B cell (primary cell): ENCODE measurements at regions of chr2 and their contacts with region 1.

Region 1: DNA sequence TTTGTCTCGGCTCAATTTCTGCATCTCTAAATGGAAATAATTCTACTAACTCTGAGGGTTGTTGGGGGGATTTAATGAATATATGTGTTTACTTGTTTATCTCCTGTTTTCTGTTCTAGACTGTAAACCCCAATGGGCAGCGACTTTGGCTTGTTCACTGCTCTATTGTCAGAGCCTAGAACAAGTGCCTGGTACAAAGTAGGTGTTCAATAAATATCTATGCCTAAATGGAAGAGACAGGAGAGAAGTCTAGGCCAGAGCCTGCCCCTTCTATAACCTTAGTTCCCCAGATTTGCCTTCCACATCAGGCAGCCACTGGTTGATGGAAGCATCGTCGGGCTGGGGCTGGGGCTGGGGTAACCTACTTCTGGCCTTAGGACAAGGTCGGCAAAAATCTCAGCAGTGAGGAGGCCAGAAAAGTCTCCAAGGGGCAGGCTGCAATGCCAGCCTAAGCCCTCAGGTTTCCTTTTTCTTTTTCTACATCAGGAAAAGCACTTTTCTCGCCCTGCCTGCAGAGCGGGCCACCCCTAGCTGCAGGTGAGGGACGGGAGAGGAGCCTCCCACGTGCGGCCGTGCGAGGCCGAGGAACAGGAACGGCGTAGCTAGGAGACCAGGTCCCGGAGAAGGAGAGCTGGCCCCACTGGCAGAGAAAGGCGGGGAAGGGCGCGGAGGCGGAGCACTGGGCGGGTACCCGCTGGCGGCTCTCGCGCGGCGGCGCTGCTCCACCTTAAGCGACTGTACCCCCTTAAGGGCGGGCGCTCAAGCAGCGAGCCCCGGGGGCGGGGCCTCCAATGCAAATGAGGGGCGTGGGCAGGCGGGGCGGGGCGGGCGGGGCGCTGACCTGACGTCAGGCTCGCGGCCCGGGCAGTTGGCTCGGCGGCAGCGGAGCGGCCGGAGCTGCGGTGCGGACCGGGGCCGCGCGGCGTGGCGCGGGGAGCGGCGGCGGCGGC is at the start of gene CNNM4:
- DNase-seq: peak; percentile 92
- ATAC-seq: peak; percentile 88
- H3K4me3 ChIP-seq: peak within 1 kb of the TSS; percentile 76 to 93 (median 84)
- H3K4me3 Mint-ChIP-seq: peak within 1 kb of the TSS; percentile 95
- H3K27ac ChIP-seq: peak within 1 kb of the TSS; percentile 69 to 79
- H3K27ac Mint-ChIP-seq: peak within 1 kb of the TSS; percentile 95
- H3K4me1 ChIP-seq: peaks cover 46 to 57% of the 10 kb centered on the region in 2 donors
- H3K4me1 Mint-ChIP-seq: peaks cover 54% of the 10 kb centered on the region
- H3K27me3 ChIP-seq: no peaks in the 10 kb centered on the region
- H3K27me3 Mint-ChIP-seq: no peaks in the 10 kb centered on the region
- CTCF ChIP-seq: no peak
- total RNA-seq, gene CNNM4: 24.0 and 25.6 TPM in 2 replicates

Region 2: GRCh38 chr2:96638144-96639121 is 121.9 kb before region 1 on chr2 and contains the start of gene KANSL3:
- CTCF ChIA-PET with region 1: interaction called, 15 read pairs
- POLR2A ChIA-PET with region 1: interaction called, 13 read pairs
- intact Hi-C with region 1: loop called (anchors 1 kb)
- DNase-seq: peak; percentile 96
- ATAC-seq: peak; percentile 89
- H3K4me3 ChIP-seq: peak within 1 kb of the TSS; percentile 81 to 96 (median 88)
- H3K4me3 Mint-ChIP-seq: peak within 1 kb of the TSS; percentile 98
- H3K27ac ChIP-seq: peak within 1 kb of the TSS; percentile 57 to 88
- H3K27ac Mint-ChIP-seq: peak within 1 kb of the TSS; percentile 96
- H3K4me1 ChIP-seq: peaks cover 20 to 24% of the 10 kb centered on the region in 2 donors
- H3K4me1 Mint-ChIP-seq: peaks cover 42% of the 10 kb centered on the region
- H3K27me3 ChIP-seq: no peaks in the 10 kb centered on the region
- H3K27me3 Mint-ChIP-seq: peaks cover 4% of the 10 kb centered on the region
- CTCF ChIP-seq: no peak
- total RNA-seq, gene KANSL3: 55.4 and 56.9 TPM in 2 replicates

Region 3: GRCh38 chr2:96739633-96740428 is 20.5 kb before region 1 on chr2 and contains the start of gene LMAN2L:
- CTCF ChIA-PET with region 1: interaction called, 13 read pairs
- POLR2A ChIA-PET with region 1: interaction called, 8 read pairs
- intact Hi-C with region 1: loop called (anchors 1 kb)
- DNase-seq: peak; percentile 97
- ATAC-seq: peak; percentile 98
- H3K4me3 ChIP-seq: peak within 1 kb of the TSS; percentile 67 to 93 (median 88)
- H3K4me3 Mint-ChIP-seq: peak within 1 kb of the TSS; percentile 97
- H3K27ac ChIP-seq: peak within 1 kb of the TSS; percentile 80 to 85
- H3K27ac Mint-ChIP-seq: peak within 1 kb of the TSS; percentile 97
- H3K4me1 ChIP-seq: peaks cover 14 to 25% of the 10 kb centered on the region in 2 donors
- H3K4me1 Mint-ChIP-seq: peaks cover 29% of the 10 kb centered on the region
- H3K27me3 ChIP-seq: no peaks in the 10 kb centered on the region
- H3K27me3 Mint-ChIP-seq: no peaks in the 10 kb centered on the region
- CTCF ChIP-seq: no peak
- total RNA-seq, gene LMAN2L: 10.7 TPM in 2 replicates

Region 4: DNA sequence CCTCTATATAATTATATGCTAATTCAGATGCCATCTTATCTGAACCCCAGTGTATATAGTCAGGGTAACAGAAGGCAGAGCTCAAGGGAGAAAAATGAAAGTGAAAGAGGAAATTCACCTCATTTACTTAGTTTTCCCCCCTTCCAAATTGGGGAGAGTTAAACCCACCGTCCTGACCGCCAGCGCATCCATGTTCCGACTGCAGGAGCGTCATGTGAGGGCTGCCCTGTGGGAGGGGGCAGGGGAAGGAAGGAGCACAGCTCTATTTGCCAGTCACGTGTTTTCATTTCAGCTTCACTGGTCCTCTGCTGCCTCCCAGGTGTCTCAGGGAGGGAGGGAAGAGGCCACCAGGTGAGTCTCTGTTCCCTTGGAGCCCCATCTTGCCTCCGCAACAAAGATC is 13.6 kb after region 1 on chr2:
- CTCF ChIA-PET with region 1: interaction called, 85 read pairs
- POLR2A ChIA-PET with region 1: interaction called, 5 read pairs
- intact Hi-C with region 1: loop called (anchors 1 kb)
- DNase-seq: peak; percentile 75
- ATAC-seq: peak; percentile 70
- H3K4me3 ChIP-seq: peak overlapping the region; percentile 11 to 67 (median 58)
- H3K4me3 Mint-ChIP-seq: peak overlapping the region; percentile 94
- H3K27ac ChIP-seq: peak overlapping the region; percentile 56 to 78
- H3K27ac Mint-ChIP-seq: peak overlapping the region; percentile 93
- H3K4me1 ChIP-seq: peaks cover 23 to 47% of the 10 kb centered on the region in 2 donors
- H3K4me1 Mint-ChIP-seq: peaks cover 44% of the 10 kb centered on the region
- H3K27me3 ChIP-seq: no peaks in the 10 kb centered on the region
- H3K27me3 Mint-ChIP-seq: no peaks in the 10 kb centered on the region
- CTCF ChIP-seq: no peak

Region 5: DNA sequence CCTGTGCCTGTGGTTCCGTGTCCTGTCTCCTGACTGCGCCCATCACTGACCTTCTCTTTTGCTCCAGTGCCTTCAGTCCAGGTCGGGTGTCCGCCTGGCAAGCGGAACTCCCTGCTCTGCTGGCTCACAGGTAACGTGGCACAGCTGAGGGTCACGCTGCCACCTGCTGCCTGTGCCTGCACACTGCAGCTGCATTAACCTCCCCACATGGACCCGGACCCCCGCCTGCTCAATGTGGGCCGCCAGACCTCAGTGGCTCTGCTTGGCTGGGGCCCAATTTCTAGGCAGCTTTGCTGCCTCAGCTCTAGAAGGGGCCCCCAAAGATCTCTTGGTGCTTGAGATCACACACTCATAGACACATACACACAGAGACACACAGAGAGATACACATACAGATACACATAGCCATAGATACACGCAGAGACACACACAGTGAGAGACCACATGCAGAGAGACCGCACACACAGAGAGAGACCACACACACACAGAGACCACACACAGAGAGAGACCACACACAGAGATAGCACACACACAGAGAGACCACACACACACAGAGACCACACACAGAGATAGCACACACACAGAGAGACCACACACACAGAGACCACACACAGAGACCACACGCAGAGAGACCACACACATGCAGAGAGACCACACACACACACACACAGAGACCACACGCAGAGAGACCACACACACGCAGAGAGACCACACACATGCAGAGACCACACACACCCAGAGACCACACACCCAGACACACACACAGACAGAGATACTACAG is 40.9 kb after region 1 on chr2:
- CTCF ChIA-PET with region 1: interaction called, 45 read pairs
- POLR2A ChIA-PET with region 1: interaction called, 4 read pairs
- intact Hi-C with region 1: loop called (anchors 1 kb)
- DNase-seq: peak; percentile 80
- ATAC-seq: peak; percentile 98
- H3K4me3 ChIP-seq: no peak overlapping the region
- H3K4me3 Mint-ChIP-seq: no peak overlapping the region
- H3K27ac ChIP-seq: no peak overlapping the region
- H3K27ac Mint-ChIP-seq: no peak overlapping the region
- H3K4me1 ChIP-seq: peaks cover 25 to 30% of the 10 kb centered on the region in 2 donors
- H3K4me1 Mint-ChIP-seq: peaks cover 4% of the 10 kb centered on the region
- H3K27me3 ChIP-seq: no peaks in the 10 kb centered on the region
- H3K27me3 Mint-ChIP-seq: no peaks in the 10 kb centered on the region
- CTCF ChIP-seq: peak; percentile 94

Region 6: GRCh38 chr2:96816128-96816835 is 56.0 kb after region 1 on chr2 and contains the start of gene CNNM3:
- CTCF ChIA-PET with region 1: interaction called, 5 read pairs
- POLR2A ChIA-PET with region 1: interaction called, 9 read pairs
- intact Hi-C with region 1: loop called (anchors 1 kb)
- DNase-seq: peak; percentile 96
- ATAC-seq: peak; percentile 91
- H3K4me3 ChIP-seq: peak within 1 kb of the TSS; percentile 59 to 95 (median 81)
- H3K4me3 Mint-ChIP-seq: peak within 1 kb of the TSS; percentile 93
- H3K27ac ChIP-seq: peak within 1 kb of the TSS; percentile 19 to 76
- H3K27ac Mint-ChIP-seq: peak within 1 kb of the TSS; percentile 93
- H3K4me1 ChIP-seq: peaks cover 34 to 37% of the 10 kb centered on the region in 2 donors
- H3K4me1 Mint-ChIP-seq: peaks cover 57% of the 10 kb centered on the region
- H3K27me3 ChIP-seq: no peaks in the 10 kb centered on the region
- H3K27me3 Mint-ChIP-seq: no peaks in the 10 kb centered on the region
- CTCF ChIP-seq: peak; percentile 73
- total RNA-seq, gene CNNM3: 52.1 and 54.7 TPM in 2 replicates

Region 7: DNA sequence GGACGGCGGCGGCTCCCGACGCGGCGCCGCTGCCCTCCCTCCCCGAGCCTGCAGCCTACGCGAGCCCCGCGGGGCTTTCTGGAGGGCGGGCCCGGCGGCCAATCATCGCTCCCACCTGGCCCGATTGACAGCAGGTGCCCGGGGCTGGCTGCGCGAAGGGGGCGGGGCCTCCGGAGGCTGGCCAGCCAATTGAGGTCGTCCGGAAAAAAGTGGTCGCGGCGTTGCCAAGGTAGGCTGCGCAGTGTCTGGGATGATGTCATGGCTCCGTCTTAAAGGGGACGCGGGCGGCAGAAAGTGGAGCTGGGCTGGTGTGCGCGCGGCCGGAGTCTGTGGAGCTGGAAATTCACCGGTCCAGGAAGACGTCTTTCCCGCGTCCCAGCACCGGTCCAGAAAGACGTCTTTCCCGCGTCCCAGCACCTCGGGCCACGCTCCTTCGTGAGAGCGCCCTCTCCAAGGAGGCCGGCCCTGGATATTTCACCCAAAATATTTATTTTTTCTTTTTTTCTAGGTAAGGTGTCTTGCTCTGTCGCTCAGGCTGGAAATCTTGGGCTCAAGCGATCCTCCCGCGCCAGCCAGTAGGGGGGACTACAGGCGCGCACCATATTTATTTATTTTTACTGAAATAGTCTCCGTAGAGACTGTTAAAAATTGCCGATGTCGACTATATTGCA is 903.8 kb after region 1 on chr2 and contains the start of gene ACTR1B:
- CTCF ChIA-PET with region 1: no interaction called
- POLR2A ChIA-PET with region 1: no interaction called
- intact Hi-C with region 1: loop called (anchors 5 kb)
- DNase-seq: peak; percentile 99
- ATAC-seq: peak; percentile 91
- H3K4me3 ChIP-seq: peak within 1 kb of the TSS; percentile 71 to 96 (median 84)
- H3K4me3 Mint-ChIP-seq: peak within 1 kb of the TSS; percentile 96
- H3K27ac ChIP-seq: peak within 1 kb of the TSS; percentile 82 to 97
- H3K27ac Mint-ChIP-seq: peak within 1 kb of the TSS; percentile 97
- H3K4me1 ChIP-seq: peaks cover 23 to 32% of the 10 kb centered on the region in 2 donors
- H3K4me1 Mint-ChIP-seq: peaks cover 33% of the 10 kb centered on the region
- H3K27me3 ChIP-seq: no peaks in the 10 kb centered on the region
- H3K27me3 Mint-ChIP-seq: no peaks in the 10 kb centered on the region
- CTCF ChIP-seq: peak; percentile 72
- total RNA-seq, gene ACTR1B: 69.0 and 70.2 TPM in 2 replicates